HEK293 (cell line): ENCODE measurements at regions of chr12 and their contacts with region 1.

Region 1: GRCh38 chr12:48924617-48925303 is 532 bp downstream of the FKBP11 start:
- H3K4me3 ChIP-seq: peak overlapping the region; percentile 38
- H3K27ac ChIP-seq: peak overlapping the region; percentile 49; the same call in 1 of the 2 replicates
- H3K4me1 ChIP-seq: no peaks in the 10 kb centered on the region
- CTCF ChIP-seq: no peak

Region 2: DNA sequence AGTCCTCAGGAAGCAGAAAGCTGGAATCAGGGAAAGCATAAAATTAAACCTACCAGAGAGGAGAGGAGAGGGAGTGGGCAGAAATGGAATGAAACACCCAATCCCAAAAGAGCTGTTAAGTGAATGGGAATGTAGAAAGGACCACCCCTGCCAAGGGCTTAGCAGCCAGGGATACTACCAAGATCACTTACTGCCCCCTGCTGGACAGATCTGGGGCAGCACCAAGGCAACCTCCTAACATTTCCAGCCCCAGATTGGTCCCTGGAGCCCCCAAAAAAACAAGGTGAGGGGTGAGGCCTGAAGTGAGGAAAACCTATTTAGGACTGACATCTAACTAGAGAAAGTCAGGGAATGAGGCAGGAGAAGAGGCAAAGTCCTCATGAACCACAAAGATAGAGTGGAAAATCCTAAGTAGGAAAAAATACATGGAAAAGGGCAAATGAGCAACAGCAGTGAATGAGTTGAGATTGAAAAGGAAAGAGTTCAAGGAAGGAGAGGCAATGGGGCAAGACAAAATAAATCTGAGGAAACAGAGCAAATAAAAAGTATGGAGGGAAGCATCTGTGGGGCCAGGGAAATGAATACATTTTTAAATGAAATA is 11.7 kb after region 1 on chr12:
- CTCF ChIA-PET with region 1: interaction called, 40 read pairs
- POLR2A ChIA-PET with region 1: no interaction called
- H3K4me3 ChIP-seq: no peak overlapping the region
- H3K27ac ChIP-seq: no peak overlapping the region
- H3K4me1 ChIP-seq: no peaks in the 10 kb centered on the region
- CTCF ChIP-seq: peak; percentile 67